ENCODE measurements at regions of chr2 and their contacts with region 1.

Region 1: GRCh38 chr2:157312866-157313486 is 12.6 kb downstream of the ERMN start:
- DNase-seq: peak; percentile 17
- H3K4me3 Mint-ChIP-seq: no peak overlapping the region
- H3K27ac Mint-ChIP-seq: peak overlapping the region; percentile 41
- H3K4me1 Mint-ChIP-seq: peaks cover 49% of the 10 kb centered on the region
- H3K27me3 Mint-ChIP-seq: no peaks in the 10 kb centered on the region

Region 2: DNA sequence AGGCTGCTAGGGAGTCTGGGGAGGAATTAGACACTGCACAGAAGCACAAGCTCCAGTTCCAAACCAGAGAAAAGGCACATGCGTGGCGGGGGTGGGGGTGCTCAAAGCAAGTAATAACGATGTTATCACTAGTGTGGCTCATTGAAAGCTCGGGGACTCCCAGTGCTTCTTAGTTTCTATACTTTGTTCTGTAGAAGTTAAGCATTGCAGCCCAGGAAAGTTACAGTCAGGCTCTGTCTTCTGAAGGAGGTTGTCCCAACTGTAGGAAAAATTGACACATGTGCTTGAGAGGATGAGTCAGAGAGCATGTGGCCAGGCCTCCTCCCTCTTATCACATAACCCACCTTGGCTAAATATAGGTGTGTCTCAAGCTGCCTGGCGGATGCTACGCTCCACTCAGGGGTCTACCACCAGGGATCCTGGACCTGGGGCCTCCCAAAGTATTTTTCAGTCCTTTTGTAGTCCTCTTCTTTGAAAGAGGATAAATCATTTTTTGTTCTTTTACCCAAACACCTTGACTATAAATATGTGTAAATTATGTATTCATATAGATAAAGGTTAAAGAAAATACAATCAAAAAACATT is 51.7 kb before region 1 on chr2:
- CTCF ChIA-PET with region 1: no interaction called
- intact Hi-C with region 1: loop called (anchors 2 kb)
- DNase-seq: peak; percentile 83
- H3K4me3 Mint-ChIP-seq: no peak overlapping the region
- H3K27ac Mint-ChIP-seq: peak overlapping the region; percentile 2
- H3K4me1 Mint-ChIP-seq: peaks cover 25% of the 10 kb centered on the region
- H3K27me3 Mint-ChIP-seq: peaks cover 11% of the 10 kb centered on the region

Region 3: DNA sequence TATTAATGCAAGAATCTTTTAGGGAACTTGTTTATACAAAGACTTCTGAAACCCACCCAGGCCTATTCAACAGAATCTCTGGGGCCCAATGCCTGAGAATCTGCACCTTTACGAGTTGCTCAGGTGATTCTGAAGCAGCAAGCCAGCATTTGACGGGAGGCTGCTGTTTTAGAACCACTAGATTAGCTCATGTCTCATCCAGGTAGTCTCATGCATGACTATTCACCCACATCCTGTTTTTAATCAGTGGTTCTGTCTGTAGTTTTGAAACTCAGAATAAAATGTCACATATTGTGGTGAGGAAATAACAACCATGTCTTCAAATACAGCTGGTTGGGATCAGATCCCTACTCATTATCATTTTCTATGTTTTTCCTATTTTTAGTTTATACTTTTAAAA is 91.4 kb after region 1 on chr2:
- CTCF ChIA-PET with region 1: no interaction called
- intact Hi-C with region 1: loop called (anchors 1 kb)
- DNase-seq: peak; percentile 80
- H3K4me3 Mint-ChIP-seq: no peak overlapping the region
- H3K27ac Mint-ChIP-seq: peak overlapping the region; percentile 72
- H3K4me1 Mint-ChIP-seq: peaks cover 76% of the 10 kb centered on the region
- H3K27me3 Mint-ChIP-seq: no peaks in the 10 kb centered on the region

Region 4: DNA sequence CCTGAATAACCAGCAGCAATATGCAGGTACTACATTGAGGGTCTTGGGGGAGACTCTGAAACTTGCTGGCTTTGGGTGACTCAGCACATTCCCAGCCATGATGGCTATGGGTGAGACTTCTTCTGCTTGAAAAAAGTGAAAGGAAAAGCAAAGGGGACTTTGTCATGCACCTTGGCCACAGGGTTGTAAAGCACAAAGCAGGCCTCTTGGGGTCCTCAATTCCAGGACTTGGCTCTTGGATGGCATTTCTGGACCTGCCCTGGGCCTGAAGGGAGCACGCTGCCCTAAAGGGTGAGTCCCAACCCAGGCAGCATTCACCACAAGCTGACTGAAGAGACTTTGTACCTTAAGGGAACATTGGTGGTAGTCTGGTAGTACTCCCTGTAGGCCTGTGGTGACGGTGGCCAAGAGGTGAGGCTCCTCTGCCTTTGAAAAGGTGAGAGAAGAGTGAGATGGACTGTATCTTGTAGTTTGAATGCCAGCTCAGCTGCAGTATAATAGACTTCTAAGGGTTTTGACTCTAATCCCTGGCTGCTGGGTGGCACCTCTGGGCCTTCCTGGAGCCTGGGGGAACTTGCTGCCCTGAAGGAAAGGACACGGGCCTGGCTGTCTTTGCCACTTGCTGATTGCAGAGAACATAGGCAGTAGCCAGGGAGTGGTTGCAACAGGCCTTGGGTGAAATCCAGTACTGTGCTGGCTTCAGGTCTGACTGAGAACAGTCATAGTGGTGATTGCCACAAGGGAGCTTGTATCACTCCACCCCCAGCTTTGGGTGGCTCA is 167.4 kb after region 1 on chr2:
- CTCF ChIA-PET with region 1: interaction called, 4 read pairs
- intact Hi-C with region 1: loop called (anchors 1 kb)
- DNase-seq: peak; percentile 83
- H3K4me3 Mint-ChIP-seq: peak overlapping the region; percentile 64
- H3K27ac Mint-ChIP-seq: peak overlapping the region; percentile 95
- H3K4me1 Mint-ChIP-seq: peaks cover 85% of the 10 kb centered on the region
- H3K27me3 Mint-ChIP-seq: no peaks in the 10 kb centered on the region

Region 5: GRCh38 chr2:157866202-157866601 is 553.2 kb after region 1 on chr2:
- CTCF ChIA-PET with region 1: no interaction called
- intact Hi-C with region 1: loop called (anchors 2 kb)
- DNase-seq: no peak
- H3K4me3 Mint-ChIP-seq: no peak overlapping the region
- H3K27ac Mint-ChIP-seq: no peak overlapping the region
- H3K4me1 Mint-ChIP-seq: peaks cover 57% of the 10 kb centered on the region
- H3K27me3 Mint-ChIP-seq: no peaks in the 10 kb centered on the region

Measured in activated naive CD4-positive, alpha-beta T cell treated with anti-CD3 and anti-CD28 coated beads for 36 hours (primary cell).